ENCODE measurements at regions of chr12 and their contacts with region 1.

Region 1: DNA sequence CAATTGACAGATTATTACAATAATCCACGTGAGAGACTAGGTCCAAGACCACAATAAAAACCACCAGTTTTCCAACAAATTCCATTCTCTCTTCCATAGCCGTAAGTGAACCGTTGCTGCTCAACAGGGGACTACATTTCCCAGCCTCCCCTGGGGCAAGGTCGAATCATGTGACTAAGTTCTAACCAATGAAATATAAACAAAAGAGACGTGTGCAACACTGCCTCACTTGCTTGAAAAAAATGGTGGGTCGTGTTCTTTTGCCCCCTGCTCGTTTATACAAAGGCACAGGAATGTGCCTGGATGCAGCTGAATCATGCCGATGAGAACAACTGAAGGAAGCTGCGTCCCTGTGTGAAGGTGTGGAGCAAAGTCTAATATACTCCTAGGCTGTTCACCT is 51.1 kb downstream of the HSPB8 start:
- DNase-seq: peak; percentile 34
- H3K4me3 Mint-ChIP-seq: no peak overlapping the region
- H3K27ac Mint-ChIP-seq: no peak overlapping the region
- H3K4me1 Mint-ChIP-seq: no peaks in the 10 kb centered on the region
- H3K27me3 Mint-ChIP-seq: no peaks in the 10 kb centered on the region
- CTCF ChIP-seq: no peak

Region 2: DNA sequence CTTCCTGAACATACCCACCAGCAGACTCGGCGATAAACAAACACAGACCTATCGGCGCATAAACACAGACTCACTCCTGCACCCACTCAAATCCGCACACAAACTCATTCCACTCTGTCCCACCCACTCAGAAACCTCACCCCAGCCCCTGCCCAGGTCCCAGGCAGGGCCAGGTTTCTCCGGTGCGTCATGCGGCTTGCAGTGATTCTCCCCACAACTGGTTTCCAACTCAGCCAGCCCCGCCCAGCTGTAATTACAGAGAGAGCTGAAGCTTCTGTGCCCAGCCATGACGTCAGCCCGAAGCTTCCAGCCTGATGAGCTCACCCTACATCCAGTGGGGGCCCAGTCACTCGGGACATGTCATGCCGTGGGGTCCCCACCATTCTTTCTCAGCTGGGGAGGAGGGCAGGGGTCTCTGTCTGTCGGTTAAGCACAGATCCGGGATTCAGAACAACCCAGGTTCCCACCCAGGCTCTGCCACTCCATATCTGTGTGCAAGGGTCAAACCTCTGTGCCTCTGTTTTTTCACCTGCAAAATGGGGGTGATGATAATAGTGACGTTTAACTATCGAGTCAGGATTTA is 53.5 kb before region 1 on chr12:
- CTCF ChIA-PET with region 1: no interaction called
- POLR2A ChIA-PET with region 1: no interaction called
- intact Hi-C with region 1: loop called (anchors 10 kb)
- DNase-seq: peak; percentile 74
- H3K4me3 Mint-ChIP-seq: peak overlapping the region; percentile 22
- H3K27ac Mint-ChIP-seq: peak overlapping the region; percentile 29
- H3K4me1 Mint-ChIP-seq: peaks cover 19% of the 10 kb centered on the region
- H3K27me3 Mint-ChIP-seq: peaks cover 15% of the 10 kb centered on the region
- CTCF ChIP-seq: no peak